Activated B cell treated with CpG ODN at 0.5 μM for 24 hours (primary cell): ENCODE measurements at regions of chr12 and their contacts with region 1.

Region 1: DNA sequence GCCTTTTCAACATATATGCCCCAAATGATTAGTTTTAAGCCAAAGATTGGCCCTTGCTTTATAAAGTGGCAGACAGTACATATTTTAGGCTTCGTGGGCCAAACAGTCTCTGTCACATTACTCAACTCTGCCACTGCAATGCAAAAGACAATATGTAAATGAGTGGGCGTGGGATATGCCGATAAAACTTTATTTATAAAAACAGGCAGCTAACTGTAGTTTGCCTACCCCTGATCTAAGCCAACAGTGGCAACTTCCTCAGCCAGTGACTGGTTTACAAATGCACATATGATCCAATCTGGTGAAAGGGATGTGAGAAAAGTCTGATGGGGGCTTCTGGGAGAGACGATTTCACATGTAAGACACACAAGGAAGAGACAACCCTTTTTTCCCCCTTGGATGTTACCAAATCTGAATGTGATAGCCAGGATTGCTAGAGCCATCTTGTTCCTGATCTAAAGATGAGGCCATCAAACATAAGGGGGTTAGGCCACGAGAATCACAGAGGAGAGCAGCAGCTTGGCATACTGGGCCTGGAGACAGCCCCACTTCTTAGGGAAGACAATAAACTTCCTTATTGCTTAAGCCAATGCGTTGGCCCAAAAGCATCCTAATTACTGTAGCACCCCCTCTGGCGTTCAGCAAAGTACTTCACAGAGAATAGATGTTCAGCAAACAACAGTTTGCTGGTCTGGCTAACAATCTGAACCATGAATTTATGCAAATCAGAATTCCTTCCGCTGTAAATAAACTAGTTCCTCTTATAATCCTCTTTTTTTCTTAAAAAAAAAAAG is 75.2 kb upstream of the TMCC3 start:
- DNase-seq: no peak
- ATAC-seq: no peak
- H3K4me3 Mint-ChIP-seq: no peak overlapping the region
- H3K27ac Mint-ChIP-seq: peak overlapping the region; percentile 15
- H3K4me1 Mint-ChIP-seq: peaks cover 53% of the 10 kb centered on the region
- H3K27me3 Mint-ChIP-seq: no peaks in the 10 kb centered on the region
- CTCF ChIP-seq: no peak

Region 2: GRCh38 chr12:94459728-94460615 is 265.6 kb before region 1 on chr12 and contains the start of gene CEP83:
- CTCF ChIA-PET with region 1: no interaction called
- POLR2A ChIA-PET with region 1: no interaction called
- intact Hi-C with region 1: loop called (anchors 5 kb)
- DNase-seq: peak; percentile 94
- ATAC-seq: peak; percentile 96
- H3K4me3 Mint-ChIP-seq: peak within 1 kb of the TSS; percentile 91
- H3K27ac Mint-ChIP-seq: peak within 1 kb of the TSS; percentile 88
- H3K4me1 Mint-ChIP-seq: peaks cover 23% of the 10 kb centered on the region
- H3K27me3 Mint-ChIP-seq: no peaks in the 10 kb centered on the region
- CTCF ChIP-seq: no peak
- total RNA-seq, gene CEP83: 25.0 and 36.9 TPM in 2 replicates

Region 3: DNA sequence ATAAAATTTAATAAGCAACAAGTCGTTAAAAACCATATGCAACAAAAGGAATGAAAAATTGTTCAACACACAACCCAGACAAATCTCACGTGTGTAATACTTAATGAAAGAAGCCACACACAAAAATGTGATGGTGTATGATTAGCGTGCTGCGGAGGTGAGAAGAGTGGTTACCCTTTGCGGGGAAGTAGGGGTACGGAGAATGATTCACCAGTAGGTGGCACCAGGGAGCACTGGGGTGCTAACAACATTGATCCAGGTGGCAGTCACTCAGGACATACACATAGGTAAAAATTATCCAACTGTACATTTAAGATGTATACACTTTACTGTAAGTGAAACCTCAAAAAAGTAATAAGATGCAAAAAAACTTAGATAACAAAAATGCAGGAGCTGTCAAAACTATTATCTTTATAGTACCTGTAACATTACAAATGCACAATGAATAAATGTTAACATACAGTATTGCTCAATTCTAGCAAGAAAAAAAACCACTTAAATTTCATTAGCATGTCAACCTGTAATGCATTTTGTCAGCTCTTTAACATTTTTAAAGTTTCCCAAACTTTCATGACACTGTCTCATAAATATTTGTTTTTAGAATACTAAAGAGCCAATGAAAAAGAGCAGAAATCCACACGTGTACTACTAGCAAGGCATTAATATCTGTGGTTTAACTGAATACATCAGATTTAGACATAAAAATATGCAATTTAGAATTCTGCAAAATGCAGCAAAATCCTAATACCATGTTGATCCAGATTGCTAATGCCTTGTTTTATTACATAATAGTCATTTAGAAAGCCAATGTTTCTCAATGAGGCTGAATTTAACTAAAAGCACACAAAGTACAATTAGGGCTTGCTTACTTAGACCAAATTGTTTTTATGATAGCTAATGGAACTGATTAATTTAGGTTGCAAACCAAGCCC is 121.9 kb before region 1 on chr12:
- CTCF ChIA-PET with region 1: interaction called, 3 read pairs
- POLR2A ChIA-PET with region 1: no interaction called
- intact Hi-C with region 1: loop called (anchors 2 kb)
- DNase-seq: peak; percentile 31
- ATAC-seq: peak; percentile 57
- H3K4me3 Mint-ChIP-seq: no peak overlapping the region
- H3K27ac Mint-ChIP-seq: no peak overlapping the region
- H3K4me1 Mint-ChIP-seq: no peaks in the 10 kb centered on the region
- H3K27me3 Mint-ChIP-seq: no peaks in the 10 kb centered on the region
- CTCF ChIP-seq: peak; percentile 24

Region 4: GRCh38 chr12:94676031-94676641 is 49.4 kb before region 1 on chr12:
- CTCF ChIA-PET with region 1: no interaction called
- POLR2A ChIA-PET with region 1: interaction called, 8 read pairs
- intact Hi-C with region 1: loop called (anchors 2 kb)
- DNase-seq: no peak
- ATAC-seq: peak; percentile 96
- H3K4me3 Mint-ChIP-seq: peak overlapping the region; percentile 60
- H3K27ac Mint-ChIP-seq: peak overlapping the region; percentile 81
- H3K4me1 Mint-ChIP-seq: peaks cover 39% of the 10 kb centered on the region
- H3K27me3 Mint-ChIP-seq: no peaks in the 10 kb centered on the region
- CTCF ChIP-seq: no peak

Region 5: DNA sequence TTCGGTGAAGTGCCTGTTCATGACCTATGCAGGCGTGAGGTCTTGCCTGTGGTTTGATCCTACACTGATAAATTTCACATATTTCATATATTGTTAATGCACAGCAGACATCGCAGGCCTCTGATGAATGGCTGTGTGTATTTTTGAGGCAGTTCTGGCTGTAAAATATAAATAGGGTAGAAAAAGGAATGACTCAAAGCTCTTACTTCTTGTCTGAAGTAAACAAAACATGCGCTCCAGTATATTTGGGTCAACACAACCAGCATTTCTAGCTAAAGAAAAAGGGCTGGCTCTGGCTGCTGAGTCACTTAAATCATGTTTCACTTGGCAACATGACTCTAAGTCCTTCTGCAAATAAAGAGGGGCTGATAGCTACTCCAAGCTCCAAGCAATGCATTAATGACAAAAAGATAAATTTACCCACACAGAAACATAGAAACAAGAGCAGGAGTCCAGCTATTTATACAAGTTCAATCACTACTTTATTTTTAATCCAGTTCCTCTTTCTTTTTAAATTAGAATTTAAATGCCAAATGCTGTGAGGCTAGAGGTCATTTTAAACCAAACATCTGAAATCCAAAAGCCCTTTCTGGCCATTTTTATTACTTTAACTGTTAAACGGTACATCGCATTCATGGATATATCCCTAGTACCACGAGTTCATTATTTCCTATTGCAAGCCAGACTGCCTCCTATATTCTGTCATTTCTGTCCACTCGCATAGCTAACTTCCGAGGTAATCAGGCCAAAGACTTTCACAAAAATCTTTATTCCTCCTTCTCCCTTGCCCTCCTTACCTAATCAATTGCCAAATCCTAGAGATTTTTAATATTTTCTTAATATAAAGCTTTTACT is 20.9 kb before region 1 on chr12:
- CTCF ChIA-PET with region 1: interaction called, 8 read pairs
- POLR2A ChIA-PET with region 1: interaction called, 14 read pairs
- intact Hi-C with region 1: loop called (anchors 1 kb)
- DNase-seq: no peak
- ATAC-seq: no peak
- H3K4me3 Mint-ChIP-seq: no peak overlapping the region
- H3K27ac Mint-ChIP-seq: no peak overlapping the region
- H3K4me1 Mint-ChIP-seq: peaks cover 73% of the 10 kb centered on the region
- H3K27me3 Mint-ChIP-seq: no peaks in the 10 kb centered on the region
- CTCF ChIP-seq: no peak

Region 6: GRCh38 chr12:94817695-94818075 is 92.1 kb after region 1 on chr12:
- CTCF ChIA-PET with region 1: no interaction called
- POLR2A ChIA-PET with region 1: interaction called, 5 read pairs
- intact Hi-C with region 1: loop called (anchors 1 kb)
- DNase-seq: no peak
- ATAC-seq: no peak
- H3K4me3 Mint-ChIP-seq: peak overlapping the region; percentile 87
- H3K27ac Mint-ChIP-seq: peak overlapping the region; percentile 97
- H3K4me1 Mint-ChIP-seq: peaks cover 71% of the 10 kb centered on the region
- H3K27me3 Mint-ChIP-seq: no peaks in the 10 kb centered on the region
- CTCF ChIP-seq: no peak

Region 7: GRCh38 chr12:94831081-94831751 is 105.6 kb after region 1 on chr12:
- CTCF ChIA-PET with region 1: no interaction called
- POLR2A ChIA-PET with region 1: interaction called, 3 read pairs
- intact Hi-C with region 1: loop called (anchors 1 kb)
- DNase-seq: peak; percentile 40
- ATAC-seq: peak; percentile 91
- H3K4me3 Mint-ChIP-seq: peak overlapping the region; percentile 81
- H3K27ac Mint-ChIP-seq: peak overlapping the region; percentile 99
- H3K4me1 Mint-ChIP-seq: peaks cover 58% of the 10 kb centered on the region
- H3K27me3 Mint-ChIP-seq: no peaks in the 10 kb centered on the region
- CTCF ChIP-seq: no peak